Activated CD4-positive, alpha-beta T cell treated with anti-CD3 and anti-CD28 coated beads for 36 hours (primary cell): ENCODE measurements at regions of chr1 and their contacts with region 1.

Region 1: GRCh38 chr1:100895540-100896483 is at the start of gene SLC30A7:
- DNase-seq: peak; percentile 98
- ATAC-seq: peak; percentile 81
- H3K4me3 Mint-ChIP-seq: peak within 1 kb of the TSS; percentile 100
- H3K27ac Mint-ChIP-seq: peak within 1 kb of the TSS; percentile 100
- H3K4me1 Mint-ChIP-seq: peaks cover 44% of the 10 kb centered on the region
- H3K27me3 Mint-ChIP-seq: no peaks in the 10 kb centered on the region
- total RNA-seq, gene SLC30A7: 33.2 to 34.6 TPM

Region 2: DNA sequence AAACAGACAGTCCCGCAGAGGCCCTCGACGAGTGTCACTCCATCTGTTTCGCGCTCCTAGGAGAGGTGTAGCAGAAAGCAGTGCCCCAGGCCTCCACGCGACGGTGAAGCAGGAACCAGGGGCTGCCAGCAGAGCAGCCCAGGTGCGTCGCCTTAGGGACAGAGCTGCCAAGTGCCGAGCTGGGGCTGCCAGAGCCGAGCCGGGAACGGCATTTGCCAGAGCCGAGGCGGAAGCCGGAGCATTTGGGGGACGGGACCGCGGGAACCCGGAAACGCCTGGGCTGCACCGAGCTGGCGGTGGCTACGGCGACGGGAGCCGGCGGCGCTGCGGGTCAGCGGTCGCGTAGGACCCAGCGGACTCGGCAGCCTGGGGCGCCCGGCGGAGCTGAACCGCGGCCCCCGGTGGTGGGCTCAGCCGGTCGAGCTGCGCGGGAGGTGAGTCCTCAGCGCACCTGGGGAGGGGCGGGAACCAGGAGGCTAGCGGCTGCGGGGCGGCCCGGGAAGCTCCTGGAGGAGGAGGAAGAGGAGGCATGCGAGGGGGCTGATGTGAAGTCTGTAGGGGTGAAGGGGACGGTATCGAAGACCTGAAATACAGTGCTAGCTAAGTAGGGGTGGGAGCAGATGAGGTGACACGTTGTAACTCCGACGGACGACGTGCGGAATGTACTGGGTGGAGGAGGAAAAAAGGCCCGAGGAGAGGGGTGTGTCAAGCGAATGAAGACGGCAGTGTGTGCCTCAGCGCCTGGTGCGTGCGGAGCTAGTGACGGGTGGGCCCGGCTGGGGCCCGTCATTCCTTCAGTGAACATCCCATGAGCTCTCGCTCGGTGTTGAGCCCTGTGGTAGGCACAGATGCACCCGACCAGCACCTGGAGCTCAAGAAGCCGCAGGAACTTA is 925.8 kb before region 1 on chr1 and contains the start of gene SLC35A3:
- CTCF ChIA-PET with region 1: no interaction called
- POLR2A ChIA-PET with region 1: no interaction called
- intact Hi-C with region 1: loop called in 1 of 2 experiments (anchors 2 kb)
- DNase-seq: peak; percentile 89
- ATAC-seq: peak; percentile 89
- H3K4me3 Mint-ChIP-seq: peak within 1 kb of the TSS; percentile 100
- H3K27ac Mint-ChIP-seq: peak within 1 kb of the TSS; percentile 94
- H3K4me1 Mint-ChIP-seq: peaks cover 26% of the 10 kb centered on the region
- H3K27me3 Mint-ChIP-seq: no peaks in the 10 kb centered on the region
- total RNA-seq, gene SLC35A3: 11.2 to 13.4 TPM

Region 3: GRCh38 chr1:100265931-100266740 is 629.7 kb before region 1 on chr1 and contains the start of gene RTCA:
- CTCF ChIA-PET with region 1: no interaction called
- POLR2A ChIA-PET with region 1: interaction called, 5 read pairs
- intact Hi-C with region 1: loop called in 1 of 2 experiments (anchors 5 kb)
- DNase-seq: peak; percentile 97
- ATAC-seq: peak; percentile 93
- H3K4me3 Mint-ChIP-seq: peak within 1 kb of the TSS; percentile 100
- H3K27ac Mint-ChIP-seq: peak within 1 kb of the TSS; percentile 99
- H3K4me1 Mint-ChIP-seq: peaks cover 32% of the 10 kb centered on the region
- H3K27me3 Mint-ChIP-seq: no peaks in the 10 kb centered on the region
- total RNA-seq, gene RTCA: 47.8 to 53.0 TPM

Region 4: GRCh38 chr1:100921109-100921706 is 25.4 kb after region 1 on chr1:
- CTCF ChIA-PET with region 1: interaction called, 3 read pairs
- POLR2A ChIA-PET with region 1: no interaction called
- intact Hi-C with region 1: loop called in 1 of 2 experiments (anchors 2 kb)
- DNase-seq: no peak
- ATAC-seq: no peak
- H3K4me3 Mint-ChIP-seq: no peak overlapping the region
- H3K27ac Mint-ChIP-seq: peak overlapping the region; percentile 70
- H3K4me1 Mint-ChIP-seq: peaks cover 43% of the 10 kb centered on the region
- H3K27me3 Mint-ChIP-seq: no peaks in the 10 kb centered on the region

Region 5: DNA sequence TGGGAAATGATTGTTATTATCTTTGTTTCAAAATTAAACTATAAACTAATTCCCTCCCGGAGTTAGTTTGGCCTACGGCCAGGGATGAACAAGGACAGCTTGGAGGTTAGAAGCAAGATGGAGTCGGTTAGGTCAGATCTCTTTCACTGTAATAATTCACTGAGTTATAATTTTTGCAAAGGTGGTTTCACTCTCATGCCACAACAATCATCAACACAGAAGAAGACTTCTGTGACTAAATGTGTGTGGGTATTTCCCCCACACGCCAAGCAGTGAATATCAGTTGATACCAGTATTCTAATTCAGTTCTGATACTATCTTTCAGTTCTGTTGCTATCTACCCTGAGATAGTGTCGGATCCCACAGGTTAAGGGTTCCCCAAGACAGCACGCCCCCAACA is 556.1 kb after region 1 on chr1:
- CTCF ChIA-PET with region 1: no interaction called
- POLR2A ChIA-PET with region 1: no interaction called
- intact Hi-C with region 1: loop called in 1 of 2 experiments (anchors 2 kb)
- DNase-seq: peak; percentile 49
- ATAC-seq: peak; percentile 94
- H3K4me3 Mint-ChIP-seq: no peak overlapping the region
- H3K27ac Mint-ChIP-seq: peak overlapping the region; percentile 21
- H3K4me1 Mint-ChIP-seq: peaks cover 39% of the 10 kb centered on the region
- H3K27me3 Mint-ChIP-seq: peaks cover 13% of the 10 kb centered on the region